Ovary (tissue), 10 donors: ENCODE measurements at regions of chr21 and their contacts with region 1.

Region 1: DNA sequence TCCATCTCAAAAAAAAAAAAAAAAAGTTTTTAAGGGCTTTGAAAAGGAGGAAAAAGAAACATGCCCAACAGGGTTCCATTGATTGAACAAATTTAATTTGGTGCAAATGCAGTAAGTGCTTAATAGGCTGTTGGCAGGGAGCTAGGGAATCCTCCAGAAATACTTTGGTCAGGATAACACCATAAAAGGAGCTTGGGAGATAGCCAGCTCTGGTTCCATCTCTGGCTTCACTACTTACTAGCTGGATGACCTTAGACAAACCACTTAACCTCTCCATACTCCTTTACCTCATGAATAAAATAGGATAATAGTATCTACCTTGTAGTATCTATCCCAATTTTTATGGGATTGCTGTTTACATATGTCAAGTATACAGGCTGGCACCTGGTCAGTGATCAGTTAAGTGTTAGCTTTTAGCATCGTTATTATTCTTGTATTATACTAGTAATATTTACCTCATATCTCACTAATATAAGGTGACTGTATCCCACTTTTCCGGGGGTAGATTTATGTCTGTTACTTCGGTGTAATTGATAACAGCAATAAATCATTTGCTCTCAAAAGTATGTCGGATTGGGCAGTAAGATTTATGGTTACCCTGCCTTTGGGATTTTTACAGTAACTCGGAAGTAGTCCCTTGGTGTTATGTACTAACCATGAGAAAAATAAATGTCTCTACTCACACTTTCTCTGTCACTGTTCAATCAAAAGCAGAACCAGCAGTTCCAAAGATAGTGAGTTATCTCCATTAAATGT is 36.4 kb downstream of the BTG3 start:
- DNase-seq: no peak
- H3K4me3 ChIP-seq: no peak overlapping the region
- H3K27ac ChIP-seq: no peak overlapping the region
- H3K4me1 ChIP-seq: no peaks in the 10 kb centered on the region
- H3K27me3 ChIP-seq: no peaks in the 10 kb centered on the region
- CTCF ChIP-seq: no peak
- EP300 ChIP-seq: no peak
- POLR2A ChIP-seq: no peak

Region 2: GRCh38 chr21:17059936-17060335 is 516.3 kb before region 1 on chr21:
- intact Hi-C with region 1: no loop called
- DNase-seq: no peak
- H3K4me3 ChIP-seq: no peak overlapping the region
- H3K27ac ChIP-seq: no peak overlapping the region
- H3K4me1 ChIP-seq: no peaks in the 10 kb centered on the region
- H3K27me3 ChIP-seq: no peaks in the 10 kb centered on the region
- CTCF ChIP-seq: no peak
- EP300 ChIP-seq: no peak
- POLR2A ChIP-seq: no peak

Region 3: GRCh38 chr21:17387030-17387617 is 189.1 kb before region 1 on chr21:
- intact Hi-C with region 1: loop called in 2 of 4 experiments (anchors 5 to 10 kb)
- DNase-seq: peak in 4 of 5 donors; percentile 12 to 49 (median 24)
- H3K4me3 ChIP-seq: no peak overlapping the region
- H3K27ac ChIP-seq: no peak overlapping the region
- H3K4me1 ChIP-seq: no peaks in the 10 kb centered on the region
- H3K27me3 ChIP-seq: no peaks in the 10 kb centered on the region
- CTCF ChIP-seq: peak; percentile 51 to 78 (median 76)
- EP300 ChIP-seq: no peak
- POLR2A ChIP-seq: no peak

Region 4: GRCh38 chr21:17393413-17393812 is 182.8 kb before region 1 on chr21:
- intact Hi-C with region 1: loop called in 2 of 4 experiments (anchors 5 to 10 kb)
- DNase-seq: no peak
- H3K4me3 ChIP-seq: no peak overlapping the region
- H3K27ac ChIP-seq: no peak overlapping the region
- H3K4me1 ChIP-seq: no peaks in the 10 kb centered on the region
- H3K27me3 ChIP-seq: no peaks in the 10 kb centered on the region
- CTCF ChIP-seq: no peak
- EP300 ChIP-seq: no peak
- POLR2A ChIP-seq: no peak

Region 5: GRCh38 chr21:17921579-17922530 is 345.6 kb after region 1 on chr21:
- intact Hi-C with region 1: no loop called
- DNase-seq: no peak
- H3K4me3 ChIP-seq: no peak overlapping the region
- H3K27ac ChIP-seq: no peak overlapping the region
- H3K4me1 ChIP-seq: no peaks in the 10 kb centered on the region
- H3K27me3 ChIP-seq: no peaks in the 10 kb centered on the region
- CTCF ChIP-seq: no peak
- EP300 ChIP-seq: no peak
- POLR2A ChIP-seq: no peak

Region 6: DNA sequence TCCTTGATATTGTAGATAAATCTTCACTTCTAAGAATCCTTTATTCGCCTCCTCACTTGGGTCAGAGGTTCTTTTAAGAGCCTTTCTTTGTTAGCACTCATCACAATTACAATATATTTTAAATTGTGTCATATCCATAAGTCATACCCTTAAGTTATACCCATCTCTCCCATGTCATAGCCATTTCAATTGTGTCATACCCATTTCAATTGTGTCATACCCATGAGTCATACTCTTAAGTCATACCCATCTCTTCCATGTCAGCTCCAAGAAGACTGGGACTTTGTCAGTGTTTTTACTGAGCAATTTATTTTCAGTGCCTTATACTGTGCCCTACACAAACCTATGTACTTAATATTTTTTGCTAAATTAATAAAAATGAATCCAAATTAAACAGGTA is 487.8 kb after region 1 on chr21:
- intact Hi-C with region 1: no loop called
- DNase-seq: no peak
- H3K4me3 ChIP-seq: no peak overlapping the region
- H3K27ac ChIP-seq: no peak overlapping the region
- H3K4me1 ChIP-seq: no peaks in the 10 kb centered on the region
- H3K27me3 ChIP-seq: no peaks in the 10 kb centered on the region
- CTCF ChIP-seq: no peak
- EP300 ChIP-seq: no peak
- POLR2A ChIP-seq: no peak